HEK293T (cell line): ENCODE measurements at regions of chr11 and their contacts with region 1.

Region 1: GRCh38 chr11:73564903-73565302 is 33.0 kb downstream of the FAM168A start:
- DNase-seq: no peak

Region 2: DNA sequence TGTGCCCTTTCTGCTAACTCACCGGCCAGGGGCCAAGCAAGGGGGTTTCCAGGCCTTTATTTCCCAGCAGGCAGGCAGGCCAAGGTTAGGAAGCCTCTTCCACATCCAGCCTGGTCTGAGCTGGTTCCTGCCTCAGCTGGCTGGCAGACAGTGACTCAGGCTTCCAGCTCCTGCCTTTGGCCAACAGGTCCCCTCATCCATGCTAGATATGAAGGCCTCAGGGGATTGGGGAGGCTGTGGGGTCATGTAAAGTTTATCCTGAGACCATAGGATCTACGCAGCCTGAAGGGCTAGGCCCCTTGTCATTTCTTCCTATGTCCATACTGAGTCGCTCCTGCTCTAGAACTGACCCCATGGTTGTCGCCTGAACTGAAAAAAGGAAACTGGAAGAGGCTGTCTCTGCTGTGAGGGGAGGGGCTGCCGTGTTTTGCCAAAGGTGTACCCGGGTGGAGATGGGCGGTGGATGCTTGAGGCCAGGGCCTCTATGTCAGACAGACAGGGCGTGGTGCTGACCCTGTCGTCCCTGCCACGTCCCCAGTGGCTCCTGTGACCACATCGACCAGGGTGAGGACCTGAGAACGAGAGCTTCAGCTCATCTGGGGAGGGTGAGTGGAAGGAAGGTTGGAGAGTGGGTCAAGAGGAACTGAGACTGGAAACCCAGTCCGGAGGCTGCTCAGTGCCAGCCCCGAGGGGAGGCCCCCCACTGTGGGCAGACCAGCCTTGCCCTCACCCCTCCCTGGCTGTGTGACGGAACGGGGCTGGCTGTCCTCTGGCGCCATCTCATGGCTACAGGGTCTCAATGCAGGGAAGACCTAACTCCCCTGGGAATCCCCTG is 275.8 kb before region 1 on chr11:
- CTCF ChIA-PET with region 1: interaction called, 13 read pairs
- POLR2A ChIA-PET with region 1: no interaction called
- DNase-seq: peak; percentile 88

Region 3: GRCh38 chr11:73414977-73415651 is 149.8 kb before region 1 on chr11:
- CTCF ChIA-PET with region 1: no interaction called
- POLR2A ChIA-PET with region 1: no interaction called
- DNase-seq: no peak

Region 4: GRCh38 chr11:73590991-73591390 is 26.1 kb after region 1 on chr11:
- CTCF ChIA-PET with region 1: no interaction called
- POLR2A ChIA-PET with region 1: no interaction called
- DNase-seq: no peak

Region 5: DNA sequence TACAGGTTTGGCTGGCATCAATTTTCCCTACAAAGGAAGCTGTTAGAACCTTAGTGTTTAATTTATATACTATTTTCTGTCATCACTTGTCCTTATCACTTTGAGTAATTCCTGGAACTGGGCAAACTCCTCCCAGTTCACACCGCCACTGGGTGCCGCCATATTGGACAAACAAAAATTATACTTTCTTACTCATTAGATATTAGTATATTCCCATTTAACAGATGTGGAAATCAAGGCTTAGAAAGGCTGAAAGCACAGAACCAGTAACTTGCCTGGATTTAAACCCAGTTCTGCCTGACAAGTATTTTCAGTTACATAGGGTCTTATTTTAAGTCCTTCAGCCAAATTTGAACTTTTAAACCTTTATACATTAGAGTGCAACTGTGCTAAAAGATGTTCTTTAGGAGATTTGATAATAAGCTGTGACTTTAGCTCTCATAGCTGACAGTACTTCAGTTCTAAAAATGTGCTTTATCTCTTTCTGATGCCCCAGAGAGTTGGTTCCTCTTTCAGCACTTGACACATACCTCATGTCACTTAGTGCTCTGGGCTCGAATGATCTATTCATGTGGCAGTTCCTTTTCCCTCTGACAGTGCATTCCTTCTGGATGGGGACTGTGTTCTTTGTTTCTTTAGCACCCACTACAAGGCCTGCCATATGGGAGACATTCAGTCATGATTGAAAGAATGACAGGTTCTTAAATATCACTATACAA is 286.3 kb after region 1 on chr11:
- CTCF ChIA-PET with region 1: no interaction called
- POLR2A ChIA-PET with region 1: no interaction called
- DNase-seq: no peak